ENCODE measurements at regions of chr3 and their contacts with region 1.

Region 1: GRCh38 chr3:53570699-53571098 is 76.3 kb downstream of the CACNA1D start:
- DNase-seq: peak; percentile 26 to 62
- H3K4me3 ChIP-seq: no peak overlapping the region
- H3K27ac ChIP-seq: no peak overlapping the region
- H3K4me1 ChIP-seq: no peaks in the 10 kb centered on the region
- H3K27me3 ChIP-seq: peaks cover 48% of the 10 kb centered on the region
- CTCF ChIP-seq: no peak

Region 2: DNA sequence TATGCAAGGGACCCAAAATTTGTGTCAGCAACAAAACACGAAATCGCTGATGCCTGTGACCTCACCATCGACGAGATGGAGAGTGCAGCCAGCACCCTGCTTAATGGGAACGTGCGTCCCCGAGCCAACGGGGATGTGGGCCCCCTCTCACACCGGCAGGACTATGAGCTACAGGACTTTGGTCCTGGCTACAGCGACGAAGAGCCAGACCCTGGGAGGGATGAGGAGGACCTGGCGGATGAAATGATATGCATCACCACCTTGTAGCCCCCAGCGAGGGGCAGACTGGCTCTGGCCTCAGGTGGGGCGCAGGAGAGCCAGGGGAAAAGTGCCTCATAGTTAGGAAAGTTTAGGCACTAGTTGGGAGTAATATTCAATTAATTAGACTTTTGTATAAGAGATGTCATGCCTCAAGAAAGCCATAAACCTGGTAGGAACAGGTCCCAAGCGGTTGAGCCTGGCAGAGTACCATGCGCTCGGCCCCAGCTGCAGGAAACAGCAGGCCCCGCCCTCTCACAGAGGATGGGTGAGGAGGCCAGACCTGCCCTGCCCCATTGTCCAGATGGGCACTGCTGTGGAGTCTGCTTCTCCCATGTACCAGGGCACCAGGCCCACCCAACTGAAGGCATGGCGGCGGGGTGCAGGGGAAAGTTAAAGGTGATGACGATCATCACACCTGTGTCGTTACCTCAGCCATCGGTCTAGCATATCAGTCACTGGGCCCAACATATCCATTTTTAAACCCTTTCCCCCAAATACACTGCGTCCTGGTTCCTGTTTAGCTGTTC is 240.6 kb after region 1 on chr3:
- CTCF ChIA-PET with region 1: interaction called, 11 read pairs
- POLR2A ChIA-PET with region 1: no interaction called
- intact Hi-C with region 1: no loop called
- DNase-seq: no peak
- H3K4me3 ChIP-seq: no peak overlapping the region
- H3K27ac ChIP-seq: no peak overlapping the region
- H3K4me1 ChIP-seq: no peaks in the 10 kb centered on the region
- H3K27me3 ChIP-seq: peaks cover 95% of the 10 kb centered on the region
- CTCF ChIP-seq: no peak

Region 3: GRCh38 chr3:54853573-54854404 is 1283.1 kb after region 1 on chr3:
- CTCF ChIA-PET with region 1: no interaction called
- POLR2A ChIA-PET with region 1: no interaction called
- intact Hi-C with region 1: no loop called
- DNase-seq: peak in 1 of 2 experiments; percentile 67
- H3K4me3 ChIP-seq: no peak overlapping the region
- H3K27ac ChIP-seq: no peak overlapping the region
- H3K4me1 ChIP-seq: no peaks in the 10 kb centered on the region
- H3K27me3 ChIP-seq: no peaks in the 10 kb centered on the region
- CTCF ChIP-seq: peak; percentile 93

Measured in PC-9 (cell line).